Posterior vena cava (tissue), 2 donors: ENCODE measurements at regions of chr22 and their contacts with region 1.

Region 1: GRCh38 chr22:33991620-33992019 is 71.3 kb upstream of the LARGE1 start:
- DNase-seq: no peak

Region 2: GRCh38 chr22:34587831-34588251 is 596.2 kb after region 1 on chr22:
- intact Hi-C with region 1: loop called in 1 of 2 experiments (anchors 5 kb)
- DNase-seq: no peak